Testis (tissue), 5 donors: ENCODE measurements at regions of chr12 and their contacts with region 1.

Region 1: GRCh38 chr12:109110988-109111495 is 5.3 kb upstream of the ACACB start:
- DNase-seq: peak; percentile 96
- H3K4me3 ChIP-seq: peak overlapping the region; percentile 53 to 64
- H3K27ac ChIP-seq: peak overlapping the region; percentile 81 to 89
- H3K4me1 ChIP-seq: peaks cover 50% of the 10 kb centered on the region
- H3K27me3 ChIP-seq: no peaks in the 10 kb centered on the region
- CTCF ChIP-seq: no peak
- POLR2A ChIP-seq: no peak

Region 2: DNA sequence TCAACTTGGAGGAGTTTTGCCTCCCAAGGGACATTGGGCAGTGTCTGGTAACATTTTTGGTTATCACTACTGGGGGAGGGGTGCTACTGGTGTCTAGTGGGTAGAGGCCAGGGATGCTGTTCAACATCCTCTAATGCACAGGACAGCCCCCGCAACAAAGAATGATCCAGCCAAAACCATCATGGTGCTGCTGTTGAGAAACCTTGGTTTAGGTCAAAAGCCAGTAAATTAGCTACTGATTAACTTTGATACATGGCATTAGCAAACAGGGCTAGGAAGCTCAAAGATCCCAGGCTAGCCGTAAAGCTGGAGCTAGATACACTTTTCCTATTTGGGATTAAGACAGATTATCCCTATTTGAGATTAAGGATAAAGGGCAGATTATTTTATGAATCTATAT is 26.6 kb before region 1 on chr12:
- intact Hi-C with region 1: no loop called
- DNase-seq: no peak
- H3K4me3 ChIP-seq: no peak overlapping the region
- H3K27ac ChIP-seq: no peak overlapping the region
- H3K4me1 ChIP-seq: no peaks in the 10 kb centered on the region
- H3K27me3 ChIP-seq: no peaks in the 10 kb centered on the region
- CTCF ChIP-seq: no peak
- POLR2A ChIP-seq: no peak

Region 3: GRCh38 chr12:109097435-109098182 is 13.4 kb before region 1 on chr12 and contains the start of gene UNG:
- intact Hi-C with region 1: loop called (anchors 2 kb)
- DNase-seq: peak; percentile 98
- H3K4me3 ChIP-seq: peak within 1 kb of the TSS; percentile 80 to 81
- H3K27ac ChIP-seq: peak within 1 kb of the TSS; percentile 67 to 90
- H3K4me1 ChIP-seq: peaks cover 15% of the 10 kb centered on the region
- H3K27me3 ChIP-seq: no peaks in the 10 kb centered on the region
- CTCF ChIP-seq: no peak
- POLR2A ChIP-seq: no peak
- total RNA-seq, gene UNG: 80.2 to 81.5 TPM

Region 4: GRCh38 chr12:109209082-109209481 is 98.0 kb after region 1 on chr12:
- intact Hi-C with region 1: no loop called
- DNase-seq: no peak
- H3K4me3 ChIP-seq: no peak overlapping the region
- H3K27ac ChIP-seq: no peak overlapping the region
- H3K4me1 ChIP-seq: no peaks in the 10 kb centered on the region
- H3K27me3 ChIP-seq: no peaks in the 10 kb centered on the region
- CTCF ChIP-seq: no peak
- POLR2A ChIP-seq: no peak

Region 5: DNA sequence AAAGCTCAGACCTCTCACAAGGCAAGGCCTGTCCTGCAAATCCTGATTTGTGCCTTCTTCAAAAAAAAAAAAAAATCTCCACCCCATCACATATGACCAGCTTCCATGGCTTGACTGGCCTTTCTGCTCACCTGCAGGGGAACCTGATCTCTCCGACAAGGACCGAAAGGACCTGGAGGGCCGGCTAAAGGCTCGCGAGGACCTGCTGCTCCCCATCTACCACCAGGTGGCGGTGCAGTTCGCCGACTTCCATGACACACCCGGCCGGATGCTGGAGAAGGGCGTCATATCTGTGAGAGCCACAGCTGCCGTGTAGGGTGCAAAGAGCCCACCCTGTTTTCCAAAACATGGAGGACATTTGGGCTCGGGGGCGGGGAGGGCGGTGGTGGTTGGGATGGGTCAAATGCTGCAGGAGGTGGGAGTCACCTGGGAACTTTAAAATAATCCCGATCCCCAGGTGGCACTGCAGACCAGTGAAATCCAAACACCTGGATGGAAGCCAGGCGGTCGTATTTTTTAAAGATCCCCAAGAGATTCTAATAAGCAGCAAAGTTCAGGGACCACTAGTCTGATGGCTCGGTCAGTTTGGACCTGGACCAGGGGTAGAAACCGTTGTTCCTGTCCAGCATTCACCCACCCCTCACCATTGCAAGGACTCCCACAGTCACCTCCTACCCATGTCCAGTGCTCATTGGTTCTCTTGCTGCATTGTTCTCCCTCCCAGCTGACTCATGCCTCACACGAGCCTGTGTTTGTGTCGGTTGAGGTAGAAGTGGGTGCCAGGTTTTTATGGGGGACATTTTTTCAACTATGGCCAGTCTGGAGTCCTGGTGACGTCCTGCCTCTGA is 153.3 kb after region 1 on chr12:
- intact Hi-C with region 1: no loop called
- DNase-seq: peak; percentile 74
- H3K4me3 ChIP-seq: no peak overlapping the region
- H3K27ac ChIP-seq: no peak overlapping the region
- H3K4me1 ChIP-seq: no peaks in the 10 kb centered on the region
- H3K27me3 ChIP-seq: no peaks in the 10 kb centered on the region
- CTCF ChIP-seq: peak; percentile 74 to 78 (median 75)
- POLR2A ChIP-seq: no peak

Region 6: GRCh38 chr12:109377139-109377685 is 266.2 kb after region 1 on chr12:
- intact Hi-C with region 1: no loop called
- DNase-seq: no peak
- H3K4me3 ChIP-seq: no peak overlapping the region
- H3K27ac ChIP-seq: no peak overlapping the region
- H3K4me1 ChIP-seq: no peaks in the 10 kb centered on the region
- H3K27me3 ChIP-seq: no peaks in the 10 kb centered on the region
- CTCF ChIP-seq: no peak
- POLR2A ChIP-seq: no peak